BJ (cell line): ENCODE measurements at regions of chr2 and their contacts with region 1.

Region 1: DNA sequence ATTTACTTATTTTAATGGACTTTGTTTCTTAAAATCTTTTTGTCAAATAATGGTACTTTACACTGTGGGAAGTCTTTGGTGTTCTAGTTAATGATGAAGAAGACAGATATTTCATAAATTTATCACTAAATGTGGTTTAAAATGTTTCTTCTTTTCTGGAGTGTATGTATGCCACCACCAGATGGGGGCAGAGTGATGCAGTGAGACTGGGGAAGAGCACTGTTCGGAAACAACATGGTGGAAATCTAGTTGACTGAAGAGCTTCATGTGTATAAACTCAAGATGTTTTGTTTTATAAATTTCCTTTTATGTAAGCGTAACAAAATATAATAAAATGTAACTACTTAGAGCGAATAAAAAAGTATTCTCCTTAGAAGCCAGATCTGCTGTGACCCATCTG is 195.1 kb downstream of the KCNE4 start:
- DNase-seq: no peak
- H3K4me3 ChIP-seq: no peak overlapping the region
- H3K27me3 ChIP-seq: no peaks in the 10 kb centered on the region
- CTCF ChIP-seq: peak; percentile 61

Region 2: DNA sequence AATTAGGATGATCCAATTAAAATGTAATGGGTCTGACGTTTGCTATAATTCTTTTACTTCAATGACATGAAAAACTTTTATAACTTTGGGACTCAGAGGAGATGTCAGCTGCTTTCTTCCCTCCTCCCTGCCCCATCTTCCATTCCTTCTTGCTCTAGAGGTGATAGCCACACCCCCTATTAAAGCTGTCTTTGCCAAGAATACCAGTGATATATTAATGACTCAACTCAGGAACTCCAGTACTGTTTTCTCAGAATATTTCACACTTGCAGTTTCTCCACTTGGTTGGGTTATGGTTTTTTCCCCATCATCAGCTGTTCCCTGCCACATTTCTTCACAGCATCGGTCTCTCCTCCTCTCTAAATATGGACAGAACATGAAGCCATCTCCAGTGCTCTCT is 11.2 kb before region 1 on chr2:
- CTCF ChIA-PET with region 1: interaction called, 19 read pairs
- POLR2A ChIA-PET with region 1: no interaction called
- DNase-seq: peak; percentile 65
- H3K4me3 ChIP-seq: no peak overlapping the region
- H3K27me3 ChIP-seq: no peaks in the 10 kb centered on the region
- CTCF ChIP-seq: no peak